Activated B cell treated with CpG ODN at 0.5 μM for 24 hours (primary cell): ENCODE measurements at regions of chr12 and their contacts with region 1.

Region 1: GRCh38 chr12:27332407-27333301 is at the start of gene BMAL2:
- DNase-seq: peak; percentile 46
- ATAC-seq: peak; percentile 60
- H3K4me3 Mint-ChIP-seq: peak within 1 kb of the TSS; percentile 89
- H3K27ac Mint-ChIP-seq: no peak within 1 kb of the TSS
- H3K4me1 Mint-ChIP-seq: peaks cover 25% of the 10 kb centered on the region
- H3K27me3 Mint-ChIP-seq: peaks cover 24% of the 10 kb centered on the region
- CTCF ChIP-seq: no peak
- total RNA-seq, gene BMAL2: 4.2 and 5.4 TPM in 2 replicates

Region 2: DNA sequence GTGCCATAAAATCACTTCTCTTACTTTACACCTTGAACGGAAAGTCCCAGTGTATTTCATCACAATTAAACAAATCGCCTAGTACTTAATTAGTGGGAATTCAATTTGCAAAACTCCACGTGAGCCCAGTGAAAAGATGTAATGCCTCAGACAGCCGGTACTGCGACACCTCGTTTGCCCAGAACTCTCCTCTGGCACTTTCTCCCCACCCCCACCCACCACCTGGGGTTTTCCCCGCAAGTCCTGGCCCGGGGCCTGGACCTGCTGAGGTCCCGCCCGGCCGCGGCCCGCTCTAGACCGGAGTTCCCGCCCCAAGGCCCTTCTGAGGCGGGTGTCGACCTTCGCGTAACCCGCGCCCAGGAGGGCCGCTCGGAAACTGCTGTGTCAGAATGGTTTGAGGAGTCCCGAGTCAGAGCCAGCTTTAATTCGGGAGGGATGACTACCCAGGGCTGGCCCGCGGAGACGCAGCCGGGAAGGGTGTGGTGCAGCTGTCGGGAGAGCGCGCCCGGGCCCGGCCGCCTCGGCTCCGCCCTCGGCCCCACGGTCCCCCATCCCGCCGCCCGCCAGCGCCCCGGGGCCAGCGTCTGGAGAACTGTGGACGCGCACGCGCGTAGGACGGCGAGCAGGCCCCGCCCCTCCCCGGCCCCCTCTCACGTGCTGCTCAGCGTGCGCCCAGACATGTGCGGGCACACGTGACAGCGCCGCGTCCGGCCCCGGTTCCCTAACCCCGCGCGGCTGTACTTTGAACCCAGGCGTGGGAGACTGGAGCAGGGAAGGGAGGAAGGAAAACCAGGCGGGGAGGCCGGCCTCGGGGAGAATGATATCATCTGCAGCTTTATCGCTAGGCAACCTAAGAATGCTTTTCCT is 1218.6 kb before region 1 on chr12:
- CTCF ChIA-PET with region 1: no interaction called
- POLR2A ChIA-PET with region 1: no interaction called
- intact Hi-C with region 1: loop called (anchors 1 kb)
- DNase-seq: peak; percentile 77
- ATAC-seq: peak; percentile 80
- H3K4me3 Mint-ChIP-seq: peak overlapping the region; percentile 85
- H3K27ac Mint-ChIP-seq: peak overlapping the region; percentile 92
- H3K4me1 Mint-ChIP-seq: peaks cover 58% of the 10 kb centered on the region
- H3K27me3 Mint-ChIP-seq: no peaks in the 10 kb centered on the region
- CTCF ChIP-seq: no peak

Region 3: DNA sequence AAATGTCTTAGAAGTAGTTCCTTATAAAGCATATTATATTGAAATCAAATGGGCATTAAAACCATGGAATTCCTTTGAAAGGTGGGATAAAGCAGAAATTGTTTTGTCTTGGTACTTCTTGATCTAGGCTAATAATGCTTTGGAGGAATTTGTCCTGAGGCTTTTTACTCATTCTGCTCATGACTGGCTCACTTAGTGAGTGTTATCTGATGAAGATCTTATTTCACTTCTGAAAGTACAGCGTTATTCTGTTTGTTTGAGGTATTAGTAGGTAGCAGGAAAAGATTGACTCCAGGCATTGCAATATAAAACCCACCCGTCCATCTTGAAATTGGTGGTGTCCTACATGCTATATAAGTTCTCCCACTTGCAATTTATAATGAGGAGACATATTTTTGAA is 255.7 kb before region 1 on chr12:
- CTCF ChIA-PET with region 1: no interaction called
- POLR2A ChIA-PET with region 1: no interaction called
- intact Hi-C with region 1: no loop called
- DNase-seq: no peak
- ATAC-seq: no peak
- H3K4me3 Mint-ChIP-seq: no peak overlapping the region
- H3K27ac Mint-ChIP-seq: no peak overlapping the region
- H3K4me1 Mint-ChIP-seq: peaks cover 14% of the 10 kb centered on the region
- H3K27me3 Mint-ChIP-seq: no peaks in the 10 kb centered on the region
- CTCF ChIP-seq: no peak

Region 4: GRCh38 chr12:27143256-27144069 is 189.2 kb before region 1 on chr12:
- CTCF ChIA-PET with region 1: no interaction called
- POLR2A ChIA-PET with region 1: no interaction called
- intact Hi-C with region 1: no loop called
- DNase-seq: no peak
- ATAC-seq: no peak
- H3K4me3 Mint-ChIP-seq: no peak overlapping the region
- H3K27ac Mint-ChIP-seq: no peak overlapping the region
- H3K4me1 Mint-ChIP-seq: peaks cover 12% of the 10 kb centered on the region
- H3K27me3 Mint-ChIP-seq: no peaks in the 10 kb centered on the region
- CTCF ChIP-seq: no peak

Region 5: DNA sequence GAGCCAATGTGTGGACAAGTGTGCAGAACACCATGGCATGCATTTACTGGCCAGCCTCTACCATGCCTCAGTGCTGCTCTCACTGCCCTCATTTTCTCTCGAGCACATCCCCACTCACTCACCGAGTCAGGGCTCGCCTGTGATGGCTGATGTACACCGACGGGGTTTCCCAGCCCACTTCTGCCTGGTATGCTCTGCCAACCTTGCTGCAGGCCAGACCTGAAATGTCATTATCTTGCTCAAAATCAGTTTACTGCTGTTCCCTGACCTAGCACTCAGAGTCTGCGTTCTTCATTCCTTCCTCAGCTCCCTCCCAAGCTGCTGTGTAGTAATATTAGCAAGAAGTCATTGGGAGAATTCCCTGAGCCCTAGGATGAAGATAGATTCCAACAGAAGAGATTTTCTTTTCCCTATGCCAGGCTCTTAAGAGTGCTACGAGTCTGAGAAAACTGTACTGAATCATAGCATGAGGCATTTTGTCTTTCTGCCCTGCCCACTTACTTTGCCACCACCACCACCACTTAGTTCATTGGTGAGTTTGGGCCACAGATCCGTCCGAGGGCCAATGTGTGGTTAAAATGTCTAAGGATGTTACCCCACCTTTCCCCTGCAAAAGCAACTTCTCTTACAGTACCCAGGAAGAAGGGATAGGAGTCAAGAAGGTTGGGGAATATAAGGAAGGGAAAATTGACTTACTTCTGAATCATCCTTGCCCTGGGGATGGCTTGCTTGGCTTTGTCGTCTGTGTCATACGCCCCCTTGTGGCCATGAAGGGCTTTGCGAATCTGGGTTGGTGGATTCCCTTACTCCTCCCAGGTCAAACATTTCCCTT is 51.0 kb after region 1 on chr12:
- CTCF ChIA-PET with region 1: interaction called, 3 read pairs
- POLR2A ChIA-PET with region 1: no interaction called
- intact Hi-C with region 1: loop called (anchors 2 kb)
- DNase-seq: peak; percentile 29
- ATAC-seq: peak; percentile 56
- H3K4me3 Mint-ChIP-seq: no peak overlapping the region
- H3K27ac Mint-ChIP-seq: no peak overlapping the region
- H3K4me1 Mint-ChIP-seq: no peaks in the 10 kb centered on the region
- H3K27me3 Mint-ChIP-seq: no peaks in the 10 kb centered on the region
- CTCF ChIP-seq: no peak

Region 6: DNA sequence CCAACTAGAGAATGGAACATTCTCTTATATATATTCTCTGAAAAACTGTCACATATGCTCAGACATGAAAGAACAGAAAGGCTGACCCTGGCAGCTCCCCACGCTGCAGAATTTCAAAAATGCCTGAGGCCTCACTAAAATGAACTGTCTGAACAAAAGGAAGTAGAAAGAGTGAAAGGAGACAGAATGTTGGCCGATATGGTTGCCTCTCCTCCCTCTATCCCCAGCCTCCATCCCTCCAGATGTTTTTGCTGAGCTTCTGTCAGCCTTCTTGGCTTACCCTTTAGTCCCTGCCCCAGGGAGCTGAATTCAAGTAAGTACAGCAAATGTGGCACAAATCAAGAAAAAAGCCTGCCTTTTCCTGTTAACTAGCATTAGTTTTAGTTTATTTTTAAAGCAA is 120.8 kb after region 1 on chr12:
- CTCF ChIA-PET with region 1: no interaction called
- POLR2A ChIA-PET with region 1: no interaction called
- intact Hi-C with region 1: no loop called
- DNase-seq: no peak
- ATAC-seq: no peak
- H3K4me3 Mint-ChIP-seq: no peak overlapping the region
- H3K27ac Mint-ChIP-seq: no peak overlapping the region
- H3K4me1 Mint-ChIP-seq: no peaks in the 10 kb centered on the region
- H3K27me3 Mint-ChIP-seq: peaks cover 12% of the 10 kb centered on the region
- CTCF ChIP-seq: no peak

Region 7: GRCh38 chr12:27523642-27524493 is 191.2 kb after region 1 on chr12 and contains the start of gene PPFIBP1:
- CTCF ChIA-PET with region 1: no interaction called
- POLR2A ChIA-PET with region 1: no interaction called
- intact Hi-C with region 1: loop called (anchors 10 kb)
- DNase-seq: peak; percentile 81
- ATAC-seq: peak; percentile 98
- H3K4me3 Mint-ChIP-seq: peak within 1 kb of the TSS; percentile 96
- H3K27ac Mint-ChIP-seq: peak within 1 kb of the TSS; percentile 93
- H3K4me1 Mint-ChIP-seq: peaks cover 23% of the 10 kb centered on the region
- H3K27me3 Mint-ChIP-seq: peaks cover 3% of the 10 kb centered on the region
- CTCF ChIP-seq: no peak
- total RNA-seq, gene PPFIBP1: 7.2 and 8.1 TPM in 2 replicates

Region 8: GRCh38 chr12:27840244-27840999 is 507.8 kb after region 1 on chr12:
- CTCF ChIA-PET with region 1: no interaction called
- POLR2A ChIA-PET with region 1: no interaction called
- intact Hi-C with region 1: no loop called
- DNase-seq: no peak
- ATAC-seq: no peak
- H3K4me3 Mint-ChIP-seq: no peak overlapping the region
- H3K27ac Mint-ChIP-seq: no peak overlapping the region
- H3K4me1 Mint-ChIP-seq: no peaks in the 10 kb centered on the region
- H3K27me3 Mint-ChIP-seq: no peaks in the 10 kb centered on the region
- CTCF ChIP-seq: no peak